Sigmoid colon (tissue), 7 donors: ENCODE measurements at regions of chr5 and their contacts with region 1.

Region 1: DNA sequence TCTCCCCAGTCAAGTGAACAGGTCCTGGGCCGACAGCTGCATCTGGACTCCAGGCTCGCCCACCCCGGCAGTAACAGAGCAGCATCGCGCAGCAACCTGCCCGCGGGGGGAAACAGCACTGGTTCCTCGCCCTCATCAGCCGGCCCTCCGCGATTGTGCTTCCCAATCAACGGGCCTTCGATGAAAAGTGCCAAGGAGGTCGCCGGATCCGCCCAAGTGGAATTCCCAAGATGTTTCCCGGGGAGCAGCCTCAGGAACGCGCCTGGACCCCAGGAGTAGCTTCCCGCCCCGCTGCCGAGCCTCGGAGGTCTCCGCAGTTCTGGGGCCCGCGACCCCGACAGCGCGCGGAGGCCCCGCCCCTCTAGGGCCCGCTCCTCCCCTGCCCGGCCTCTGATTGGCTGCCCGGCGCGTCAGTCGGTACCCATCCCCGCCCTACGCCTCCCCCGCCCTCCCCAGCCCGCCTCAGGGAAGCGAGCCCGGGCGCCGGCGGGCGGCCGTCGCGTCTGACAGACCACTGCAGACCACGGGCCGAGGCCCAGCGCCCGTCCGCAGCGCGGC is at the start of gene OTULINL:
- DNase-seq: peak; percentile 93
- H3K4me3 ChIP-seq: peak within 1 kb of the TSS; percentile 28 to 82 (median 70)
- H3K27ac ChIP-seq: peak within 1 kb of the TSS; percentile 47 to 73 (median 64)
- H3K4me1 ChIP-seq: peaks cover 0 to 21% (median 18%) of the 10 kb centered on the region in 4 donors
- H3K27me3 ChIP-seq: peaks cover 2 to 30% (median 24%) of the 10 kb centered on the region in 3 donors
- CTCF ChIP-seq: no peak
- EP300 ChIP-seq: no peak
- POLR2A ChIP-seq: no peak
- total RNA-seq, gene OTULINL: 1.9 to 5.7 (median 5.1) TPM

Region 2: DNA sequence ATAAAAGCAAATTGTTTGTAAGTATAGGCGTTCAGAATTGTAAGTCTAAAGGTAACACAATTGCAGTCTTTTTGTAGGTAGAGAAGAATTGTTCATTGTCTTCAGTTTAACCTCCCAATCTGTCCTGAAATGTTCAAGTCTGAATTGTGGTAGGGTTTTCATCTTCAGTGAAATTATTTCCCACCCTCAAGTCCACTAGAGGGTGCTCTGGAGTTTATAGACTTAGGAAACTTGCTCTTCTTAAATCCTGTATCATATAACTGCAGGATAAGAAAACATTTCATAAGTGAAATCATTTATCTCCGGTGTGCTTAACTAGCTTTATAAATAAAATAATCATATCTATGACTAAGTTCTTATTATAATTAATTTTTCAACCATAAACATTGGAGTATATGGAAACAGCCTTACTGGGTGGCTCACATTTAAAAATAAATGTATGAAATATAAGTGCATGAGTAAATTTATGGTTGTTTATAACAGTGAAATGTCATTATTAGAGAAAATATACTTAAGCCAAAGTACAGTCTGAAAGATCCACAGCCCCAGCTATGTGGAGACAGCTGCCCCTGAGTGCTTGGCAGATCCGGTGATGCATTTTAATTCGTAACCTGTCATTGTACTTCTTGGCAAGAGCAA is 182.2 kb before region 1 on chr5:
- intact Hi-C with region 1: loop called (anchors 10 kb)
- DNase-seq: no peak
- H3K4me3 ChIP-seq: no peak overlapping the region
- H3K27ac ChIP-seq: peak overlapping the region in 2 of 4 donors; percentile 33 to 35
- H3K4me1 ChIP-seq: peaks cover 0 to 32% (median 8%) of the 10 kb centered on the region in 4 donors
- H3K27me3 ChIP-seq: no peaks in the 10 kb centered on the region
- CTCF ChIP-seq: peak; percentile 18 to 65 (median 56)
- EP300 ChIP-seq: no peak
- POLR2A ChIP-seq: no peak

Region 3: DNA sequence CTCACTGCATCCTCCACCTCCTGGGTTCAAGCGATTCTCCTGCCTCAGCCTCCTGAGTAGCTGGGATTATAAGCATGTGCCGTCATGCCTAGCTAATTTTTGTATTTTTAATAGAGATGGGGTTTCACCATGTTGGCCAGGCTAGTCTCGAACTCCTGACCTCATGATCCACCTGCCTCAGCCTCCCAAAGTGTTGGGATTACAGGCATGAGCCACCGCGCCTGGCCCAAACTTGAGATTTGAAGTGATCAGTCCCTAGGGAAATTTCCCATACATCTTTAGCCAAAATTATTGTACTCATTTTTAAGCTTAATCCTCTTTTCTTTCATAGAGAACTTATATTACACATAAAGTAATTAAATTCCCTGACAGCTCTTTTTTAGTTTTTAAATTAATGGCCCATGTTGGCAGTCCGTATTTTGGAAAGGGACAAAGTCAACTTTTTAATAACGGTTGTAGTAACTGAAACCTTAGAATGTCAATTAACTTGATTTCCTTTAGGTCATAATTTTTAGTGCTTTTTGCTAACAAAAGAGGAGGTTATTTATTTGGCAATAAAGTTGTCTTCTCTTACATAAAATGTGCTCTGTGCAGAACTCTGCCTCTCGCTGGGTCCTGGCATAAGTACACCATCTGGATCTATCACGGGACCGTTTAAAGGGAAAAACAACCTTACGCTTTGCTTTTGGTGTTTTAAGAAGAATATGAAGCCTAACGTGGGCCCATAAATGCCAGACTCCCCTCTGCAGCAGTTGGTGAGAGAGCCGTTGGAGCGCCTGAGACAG is 142.1 kb before region 1 on chr5:
- intact Hi-C with region 1: loop called (anchors 5 kb)
- DNase-seq: no peak
- H3K4me3 ChIP-seq: no peak overlapping the region
- H3K27ac ChIP-seq: peak overlapping the region; percentile 77 to 90 (median 82)
- H3K4me1 ChIP-seq: peaks cover 0 to 55% (median 45%) of the 10 kb centered on the region in 4 donors
- H3K27me3 ChIP-seq: no peaks in the 10 kb centered on the region
- CTCF ChIP-seq: no peak
- EP300 ChIP-seq: no peak
- POLR2A ChIP-seq: no peak

Region 4: GRCh38 chr5:14664302-14665100 is 83.1 kb after region 1 on chr5 and contains the start of gene OTULIN:
- intact Hi-C with region 1: loop called (anchors 5 kb)
- DNase-seq: peak; percentile 95
- H3K4me3 ChIP-seq: peak within 1 kb of the TSS; percentile 61 to 79 (median 69)
- H3K27ac ChIP-seq: peak within 1 kb of the TSS; percentile 85 to 95 (median 92)
- H3K4me1 ChIP-seq: peaks cover 0 to 40% (median 33%) of the 10 kb centered on the region in 4 donors
- H3K27me3 ChIP-seq: no peaks in the 10 kb centered on the region
- CTCF ChIP-seq: no peak
- EP300 ChIP-seq: peak in 1 of 4 donors; percentile 8
- POLR2A ChIP-seq: peak; percentile 62 to 79
- total RNA-seq, gene OTULIN: 12.9 to 37.9 (median 19.8) TPM